ENCODE measurements at regions of chr9 and their contacts with region 1.

Region 1: GRCh38 chr9:17075758-17076485 is 58.9 kb upstream of the CNTLN start:
- DNase-seq: no peak
- H3K4me3 ChIP-seq: no peak overlapping the region
- H3K27ac ChIP-seq: no peak overlapping the region
- H3K4me1 ChIP-seq: no peaks in the 10 kb centered on the region
- H3K27me3 ChIP-seq: no peaks in the 10 kb centered on the region
- CTCF ChIP-seq: no peak
- EP300 ChIP-seq: no peak
- POLR2A ChIP-seq: no peak

Region 2: GRCh38 chr9:15867988-15868387 is 1207.9 kb before region 1 on chr9:
- intact Hi-C with region 1: loop called (anchors 10 kb)
- DNase-seq: no peak
- H3K4me3 ChIP-seq: no peak overlapping the region
- H3K27ac ChIP-seq: no peak overlapping the region
- H3K4me1 ChIP-seq: no peaks in the 10 kb centered on the region
- H3K27me3 ChIP-seq: no peaks in the 10 kb centered on the region
- CTCF ChIP-seq: no peak
- EP300 ChIP-seq: no peak
- POLR2A ChIP-seq: no peak

Region 3: DNA sequence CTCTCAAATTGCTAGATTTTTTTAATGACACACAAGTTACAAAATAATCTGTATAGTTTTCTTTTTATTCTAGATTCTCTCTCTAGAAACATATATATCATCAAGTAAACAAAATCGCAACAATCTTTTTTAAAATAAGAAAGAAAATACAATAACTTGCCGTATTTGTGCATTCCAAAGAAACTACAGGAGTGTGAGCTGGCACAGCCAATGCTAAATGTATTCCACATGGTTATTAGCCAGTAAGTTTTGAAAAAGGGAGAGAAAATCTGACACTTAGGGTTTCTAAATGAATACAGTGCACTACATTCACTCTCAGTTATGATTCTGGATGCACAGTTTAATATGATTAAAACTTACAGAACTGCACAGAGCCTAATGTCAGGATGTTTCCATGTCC is 323.3 kb before region 1 on chr9:
- intact Hi-C with region 1: no loop called
- DNase-seq: no peak
- H3K4me3 ChIP-seq: no peak overlapping the region
- H3K27ac ChIP-seq: no peak overlapping the region
- H3K4me1 ChIP-seq: peaks cover 0 to 25% (median 12%) of the 10 kb centered on the region in 4 donors
- H3K27me3 ChIP-seq: no peaks in the 10 kb centered on the region
- CTCF ChIP-seq: no peak
- EP300 ChIP-seq: no peak
- POLR2A ChIP-seq: no peak

Measured in sigmoid colon (tissue), 7 donors.